Right cardiac atrium (tissue), 5 donors: ENCODE measurements at regions of chr2 and their contacts with region 1.

Region 1: GRCh38 chr2:32772638-32773447 is 145.0 kb downstream of the TTC27 start:
- DNase-seq: no peak
- ATAC-seq: peak; percentile 81 to 86
- H3K4me3 ChIP-seq: no peak overlapping the region
- H3K27ac ChIP-seq: no peak overlapping the region
- H3K4me1 ChIP-seq: no peaks in the 10 kb centered on the region
- H3K27me3 ChIP-seq: no peaks in the 10 kb centered on the region

Region 2: DNA sequence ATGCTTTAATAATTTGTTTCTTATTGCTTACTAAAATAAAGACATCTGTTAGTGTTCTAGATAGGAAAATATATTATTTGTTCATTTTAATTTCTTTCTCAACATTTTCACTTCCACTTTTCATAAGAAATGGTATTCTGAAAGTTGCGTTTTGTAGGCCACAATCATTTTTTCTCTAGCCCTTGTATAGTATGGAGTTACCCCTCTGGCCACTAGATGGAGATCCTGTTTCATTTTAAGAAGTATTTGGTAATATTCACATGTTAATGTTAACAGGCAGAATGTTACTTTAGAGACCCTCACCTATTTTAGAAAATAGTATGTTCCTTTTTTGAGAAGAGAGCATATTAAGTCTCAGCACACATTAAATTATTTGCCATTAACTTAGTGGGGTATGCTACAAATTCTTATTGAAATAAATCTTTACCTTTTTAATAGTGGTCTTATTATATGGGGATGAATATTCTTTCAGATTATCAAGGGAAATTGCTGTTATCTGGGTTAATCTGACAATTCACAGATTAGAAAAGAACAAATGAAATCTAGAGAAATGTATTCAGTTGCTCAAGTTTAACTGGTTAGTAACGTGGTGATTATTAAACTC is 218.9 kb before region 1 on chr2:
- intact Hi-C with region 1: loop called in 1 of 4 experiments (anchors 10 kb)
- DNase-seq: no peak
- ATAC-seq: peak; percentile 74 to 77
- H3K4me3 ChIP-seq: no peak overlapping the region
- H3K27ac ChIP-seq: no peak overlapping the region
- H3K4me1 ChIP-seq: no peaks in the 10 kb centered on the region
- H3K27me3 ChIP-seq: no peaks in the 10 kb centered on the region

Region 3: DNA sequence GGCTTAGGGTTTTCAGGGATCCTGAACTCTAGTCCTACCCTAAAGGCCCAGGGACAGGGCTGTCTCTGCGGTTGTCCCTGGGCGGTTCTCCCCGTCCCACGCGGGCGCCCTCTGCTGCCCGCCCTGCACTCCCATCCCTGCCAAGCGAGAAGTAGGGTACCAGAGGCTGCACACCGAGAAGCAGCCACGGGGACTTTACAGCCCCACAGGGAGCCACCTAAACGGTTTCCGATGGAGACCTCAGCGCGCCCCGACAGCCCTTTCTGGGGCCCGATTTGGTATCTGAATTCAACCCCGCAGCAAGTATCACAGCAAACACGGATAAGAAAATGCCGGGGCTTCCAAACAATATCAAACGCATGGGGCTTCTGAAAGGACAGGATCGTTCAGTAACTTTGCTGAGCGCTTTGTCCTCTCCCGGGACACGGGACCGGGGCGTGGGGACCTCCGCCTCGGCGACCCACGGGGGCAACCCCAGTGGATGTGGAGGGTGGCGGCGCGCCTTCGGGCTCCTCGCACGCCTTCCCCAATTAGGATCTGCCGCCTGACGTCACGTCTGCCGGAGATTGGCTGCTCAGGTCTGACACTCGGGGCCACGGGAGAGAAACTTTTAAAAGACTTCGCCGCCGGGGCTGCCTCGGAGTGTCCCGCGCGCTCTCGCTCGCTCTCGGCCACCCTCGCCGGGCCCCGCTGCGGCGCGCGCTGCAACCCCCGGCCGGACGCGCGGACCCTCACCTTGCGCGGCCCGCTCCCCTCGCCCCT is 173.7 kb after region 1 on chr2 and contains the start of gene LTBP1:
- intact Hi-C with region 1: loop called in 3 of 4 experiments (anchors 2 to 10 kb)
- DNase-seq: peak; percentile 80 to 91 (median 90)
- ATAC-seq: peak; percentile 87 to 92
- H3K4me3 ChIP-seq: peak within 1 kb of the TSS; percentile 94
- H3K27ac ChIP-seq: peak within 1 kb of the TSS; percentile 70
- H3K4me1 ChIP-seq: no peaks in the 10 kb centered on the region
- H3K27me3 ChIP-seq: no peaks in the 10 kb centered on the region
- total RNA-seq, gene LTBP1: 103 to 218 (median 114) TPM

Region 4: GRCh38 chr2:33015421-33016142 is 242.7 kb after region 1 on chr2:
- intact Hi-C with region 1: loop called in 1 of 4 experiments (anchors 5 kb)
- DNase-seq: no peak
- ATAC-seq: peak; percentile 75 to 86
- H3K4me3 ChIP-seq: no peak overlapping the region
- H3K27ac ChIP-seq: peak overlapping the region; percentile 23
- H3K4me1 ChIP-seq: peaks cover 10% of the 10 kb centered on the region
- H3K27me3 ChIP-seq: no peaks in the 10 kb centered on the region

Region 5: GRCh38 chr2:33372940-33373553 is 600.2 kb after region 1 on chr2:
- intact Hi-C with region 1: loop called in 1 of 4 experiments (anchors 5 kb)
- DNase-seq: no peak
- ATAC-seq: no peak
- H3K4me3 ChIP-seq: no peak overlapping the region
- H3K27ac ChIP-seq: no peak overlapping the region
- H3K4me1 ChIP-seq: no peaks in the 10 kb centered on the region
- H3K27me3 ChIP-seq: no peaks in the 10 kb centered on the region